HEK293 (cell line): ENCODE measurements at regions of chr19 and their contacts with region 1.

Region 1: GRCh38 chr19:46788262-46788967 is at the start of gene SLC1A5:
- H3K4me3 ChIP-seq: peak within 1 kb of the TSS; percentile 57
- H3K27ac ChIP-seq: peak within 1 kb of the TSS; percentile 96
- H3K4me1 ChIP-seq: peaks cover 24% of the 10 kb centered on the region
- CTCF ChIP-seq: no peak; the same call in 1 of the 2 replicates

Region 2: DNA sequence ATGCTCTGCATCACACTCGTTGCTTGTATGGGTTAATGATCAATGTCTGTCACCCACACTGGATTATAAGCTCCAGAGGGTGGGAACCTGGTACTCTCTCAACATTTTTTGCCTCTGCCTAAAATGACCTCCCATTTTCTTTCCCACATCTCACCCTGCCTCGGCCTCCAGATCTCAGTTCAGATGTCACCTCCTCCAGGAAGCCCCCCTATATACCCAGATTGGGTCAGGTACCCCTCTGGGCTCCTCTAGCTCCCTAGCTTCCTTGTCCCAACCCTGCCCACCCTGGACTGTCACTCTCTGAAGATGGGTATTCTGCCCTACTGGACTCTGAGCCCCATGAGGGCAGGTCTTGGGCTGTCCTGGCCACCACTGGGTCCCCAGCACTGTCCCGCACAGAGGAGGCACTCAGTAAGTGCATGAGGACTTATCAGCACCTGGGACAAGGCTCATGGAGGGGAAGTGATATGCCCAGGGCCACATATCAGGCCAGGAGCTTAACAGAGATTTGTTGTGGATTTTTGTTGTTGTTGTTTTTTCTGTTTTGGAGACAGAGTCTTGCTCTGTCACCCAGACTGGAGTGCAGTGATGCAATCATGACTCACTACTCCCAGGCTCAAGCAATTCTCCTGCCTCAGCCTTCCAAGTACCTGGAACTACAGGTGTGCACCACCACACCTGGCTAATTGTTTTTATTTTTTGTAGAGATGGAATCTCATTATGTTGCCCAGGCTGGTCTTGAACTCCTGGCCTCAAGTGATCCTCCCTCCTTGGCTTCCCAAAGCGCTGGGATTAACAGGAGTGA is 95.3 kb before region 1 on chr19:
- CTCF ChIA-PET with region 1: no interaction called
- POLR2A ChIA-PET with region 1: no interaction called
- H3K4me3 ChIP-seq: no peak overlapping the region
- H3K27ac ChIP-seq: no peak overlapping the region
- H3K4me1 ChIP-seq: no peaks in the 10 kb centered on the region
- CTCF ChIP-seq: no peak

Region 3: DNA sequence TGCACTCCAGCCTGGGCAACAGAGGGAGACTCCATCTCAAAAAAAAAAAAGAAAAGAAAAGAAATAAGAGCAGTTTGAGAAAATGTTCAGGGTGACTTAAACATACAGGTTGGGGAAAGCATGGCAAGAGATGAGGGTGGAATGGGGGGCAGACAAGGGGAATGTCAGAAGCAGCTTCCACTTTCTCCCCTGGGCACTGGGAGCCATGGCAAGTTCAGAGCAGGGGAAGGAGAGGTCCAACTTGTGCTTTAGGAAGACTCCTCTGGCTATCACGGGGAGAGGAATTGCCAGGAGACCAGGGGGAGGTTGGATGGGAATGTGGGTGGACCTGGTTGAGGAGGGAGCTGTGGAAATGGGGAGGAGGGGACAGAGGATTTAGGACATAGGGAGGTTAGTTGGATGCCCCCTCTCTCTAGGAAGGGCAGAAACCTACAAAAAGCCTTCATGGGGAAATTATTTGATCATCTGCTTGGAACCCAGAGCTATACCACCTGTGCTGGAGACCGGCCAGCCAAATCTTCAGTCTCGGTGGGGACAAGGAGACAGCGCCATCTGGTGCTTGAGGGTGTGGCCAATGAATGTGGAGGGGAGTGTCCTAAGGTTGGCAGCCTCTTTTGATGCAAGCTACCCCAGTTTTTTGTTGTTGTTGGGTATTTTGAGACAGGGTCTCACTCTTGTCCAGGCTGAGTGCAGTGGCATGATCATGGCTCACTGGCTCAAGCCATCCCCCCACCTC is 34.8 kb before region 1 on chr19:
- CTCF ChIA-PET with region 1: interaction called, 10 read pairs
- POLR2A ChIA-PET with region 1: interaction called, 9 read pairs
- H3K4me3 ChIP-seq: no peak overlapping the region
- H3K27ac ChIP-seq: no peak overlapping the region
- H3K4me1 ChIP-seq: no peaks in the 10 kb centered on the region
- CTCF ChIP-seq: peak; percentile 57

Region 4: GRCh38 chr19:46776927-46777911 is 11.2 kb before region 1 on chr19:
- CTCF ChIA-PET with region 1: interaction called, 7 read pairs
- POLR2A ChIA-PET with region 1: interaction called, 11 read pairs
- H3K4me3 ChIP-seq: no peak overlapping the region
- H3K27ac ChIP-seq: no peak overlapping the region
- H3K4me1 ChIP-seq: no peaks in the 10 kb centered on the region
- CTCF ChIP-seq: no peak

Region 5: DNA sequence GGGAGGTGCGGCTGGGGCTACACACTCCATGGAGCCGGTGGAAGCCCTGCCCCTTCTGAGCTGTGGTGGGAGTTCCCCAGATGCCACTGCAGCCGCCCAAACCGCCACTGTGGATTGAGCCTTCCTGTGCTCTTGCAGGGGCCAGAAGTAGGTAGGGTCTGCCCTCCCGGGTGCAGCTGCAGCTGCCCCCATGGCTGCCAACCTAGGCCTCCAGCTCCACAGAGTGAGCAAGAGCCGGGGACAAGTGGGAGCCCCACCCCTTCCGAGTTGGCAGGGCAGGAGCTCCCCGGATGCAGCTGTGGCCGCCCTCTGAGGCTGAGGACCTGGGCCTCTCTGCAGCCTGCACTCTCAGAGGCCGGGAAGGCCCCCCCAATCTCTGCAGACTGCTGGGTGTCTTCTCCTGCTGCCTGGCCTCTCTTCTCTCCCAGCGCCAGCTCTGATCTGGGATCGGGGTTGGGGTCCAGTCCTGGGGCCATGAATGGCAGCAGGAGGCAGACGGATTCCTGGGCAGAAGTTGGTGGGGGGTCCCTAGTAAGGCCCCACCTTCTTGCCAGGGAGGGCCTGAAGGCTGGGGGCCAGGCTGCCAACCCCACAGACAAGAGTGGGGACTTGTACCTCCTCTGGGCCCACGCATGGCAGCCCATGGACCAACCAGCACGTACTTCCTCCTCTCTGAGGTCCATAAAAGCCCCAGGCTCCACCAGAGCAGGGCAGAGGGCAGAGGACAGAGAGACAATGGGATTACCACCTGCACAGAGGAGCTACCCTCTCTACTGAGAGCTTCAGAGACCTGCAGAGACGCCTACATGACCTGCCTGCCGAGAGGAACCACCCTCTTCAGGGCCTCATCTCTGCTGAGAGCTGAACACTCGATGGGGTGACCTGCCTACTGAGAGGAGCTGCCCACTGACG is 33.3 kb after region 1 on chr19:
- CTCF ChIA-PET with region 1: interaction called, 4 read pairs
- POLR2A ChIA-PET with region 1: interaction called, 44 read pairs
- H3K4me3 ChIP-seq: no peak overlapping the region
- H3K27ac ChIP-seq: no peak overlapping the region
- H3K4me1 ChIP-seq: peaks cover 7% of the 10 kb centered on the region
- CTCF ChIP-seq: no peak

Region 6: GRCh38 chr19:46850228-46851203 is 62.1 kb after region 1 on chr19 and contains the start of gene AP2S1:
- CTCF ChIA-PET with region 1: no interaction called
- POLR2A ChIA-PET with region 1: interaction called, 13 read pairs
- H3K4me3 ChIP-seq: peak within 1 kb of the TSS; percentile 78
- H3K27ac ChIP-seq: peak within 1 kb of the TSS; percentile 97
- H3K4me1 ChIP-seq: peaks cover 7% of the 10 kb centered on the region
- CTCF ChIP-seq: peak; percentile 39; the same call in 1 of the 2 replicates